Ascending aorta (tissue), 2 donors: ENCODE measurements at regions of chr12 and their contacts with region 1.

Region 1: DNA sequence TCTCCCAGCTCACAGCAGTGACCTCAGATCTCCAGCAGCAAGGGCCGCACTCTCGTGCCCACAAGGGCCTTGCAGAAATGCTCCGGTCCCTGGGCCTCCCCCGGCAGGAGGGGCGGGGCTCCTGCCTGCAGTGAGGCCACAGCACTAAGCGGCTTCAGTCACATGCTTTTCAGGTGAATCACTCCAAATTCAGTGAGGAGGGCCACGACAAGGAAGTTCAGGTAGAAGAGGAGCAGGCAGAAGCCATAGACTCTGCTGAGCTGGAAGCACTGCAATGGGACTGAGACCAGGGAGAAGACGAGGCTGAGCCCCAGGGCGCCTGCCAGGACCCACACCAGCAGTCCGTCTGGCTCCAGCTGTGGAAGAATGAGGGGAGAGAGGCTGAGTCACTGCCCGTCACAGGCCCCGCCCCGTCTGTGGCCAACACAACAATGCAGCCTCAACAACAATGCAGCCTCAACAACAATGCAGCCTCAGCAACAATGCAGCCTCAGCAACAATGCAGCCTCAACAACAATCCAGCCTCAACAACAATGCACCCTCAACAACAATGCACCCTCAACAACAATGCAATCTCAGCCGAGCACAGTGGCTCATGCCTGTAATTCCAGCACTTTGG is 35.2 kb downstream of the SLC8B1 start:
- DNase-seq: peak; percentile 42 to 84
- H3K4me3 ChIP-seq: peak overlapping the region in 1 of 2 donors; percentile 33
- H3K27ac ChIP-seq: peak overlapping the region; percentile 73 to 95
- H3K4me1 ChIP-seq: peaks cover 14 to 30% of the 10 kb centered on the region in 2 donors
- H3K27me3 ChIP-seq: no peaks in the 10 kb centered on the region
- CTCF ChIP-seq: no peak

Region 2: DNA sequence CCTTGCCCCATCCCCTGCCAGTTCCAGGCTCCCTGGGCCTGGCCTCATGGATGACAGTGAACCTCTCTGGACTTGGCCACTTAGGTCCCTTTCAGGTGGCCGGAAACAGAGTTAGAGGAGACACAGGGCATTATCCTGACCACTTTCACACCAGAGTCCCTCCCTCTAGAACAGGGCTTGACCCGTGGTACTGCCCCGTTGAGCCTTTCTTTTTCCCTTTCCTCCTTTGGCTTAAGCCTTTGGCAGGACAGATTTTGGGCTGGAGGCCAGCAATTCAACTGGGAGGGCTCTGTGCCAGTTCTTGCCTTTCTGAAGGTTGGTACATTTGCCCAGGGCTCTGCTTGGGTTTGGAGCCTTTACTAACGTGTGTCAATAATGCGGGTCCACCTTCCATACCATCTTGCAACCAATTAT is 55.7 kb before region 1 on chr12:
- intact Hi-C with region 1: loop called (anchors 2 kb)
- DNase-seq: peak in 1 of 2 donors; percentile 91
- H3K4me3 ChIP-seq: peak overlapping the region in 1 of 2 donors; percentile 34
- H3K27ac ChIP-seq: peak overlapping the region; percentile 86 to 94
- H3K4me1 ChIP-seq: peaks cover 48 to 78% of the 10 kb centered on the region in 2 donors
- H3K27me3 ChIP-seq: no peaks in the 10 kb centered on the region
- CTCF ChIP-seq: no peak

Region 3: GRCh38 chr12:113735131-113735530 is 435.4 kb after region 1 on chr12:
- intact Hi-C with region 1: no loop called
- DNase-seq: no peak
- H3K4me3 ChIP-seq: no peak overlapping the region
- H3K27ac ChIP-seq: no peak overlapping the region
- H3K4me1 ChIP-seq: no peaks in the 10 kb centered on the region
- H3K27me3 ChIP-seq: no peaks in the 10 kb centered on the region
- CTCF ChIP-seq: no peak